Activated T-helper 2 cell treated with anti-CD3 and anti-CD28 coated beads, Interferon-gamma antibody, Interleukin-2, Interleukin-4, amounts not matched to agents 10 μg/mL and 5 μg/mL and 100 μg/mL, durations not matched to agents 14 hours and 24 hours and 36 hours (primary cell): ENCODE measurements at regions of chr6 and their contacts with region 1.

Region 1: DNA sequence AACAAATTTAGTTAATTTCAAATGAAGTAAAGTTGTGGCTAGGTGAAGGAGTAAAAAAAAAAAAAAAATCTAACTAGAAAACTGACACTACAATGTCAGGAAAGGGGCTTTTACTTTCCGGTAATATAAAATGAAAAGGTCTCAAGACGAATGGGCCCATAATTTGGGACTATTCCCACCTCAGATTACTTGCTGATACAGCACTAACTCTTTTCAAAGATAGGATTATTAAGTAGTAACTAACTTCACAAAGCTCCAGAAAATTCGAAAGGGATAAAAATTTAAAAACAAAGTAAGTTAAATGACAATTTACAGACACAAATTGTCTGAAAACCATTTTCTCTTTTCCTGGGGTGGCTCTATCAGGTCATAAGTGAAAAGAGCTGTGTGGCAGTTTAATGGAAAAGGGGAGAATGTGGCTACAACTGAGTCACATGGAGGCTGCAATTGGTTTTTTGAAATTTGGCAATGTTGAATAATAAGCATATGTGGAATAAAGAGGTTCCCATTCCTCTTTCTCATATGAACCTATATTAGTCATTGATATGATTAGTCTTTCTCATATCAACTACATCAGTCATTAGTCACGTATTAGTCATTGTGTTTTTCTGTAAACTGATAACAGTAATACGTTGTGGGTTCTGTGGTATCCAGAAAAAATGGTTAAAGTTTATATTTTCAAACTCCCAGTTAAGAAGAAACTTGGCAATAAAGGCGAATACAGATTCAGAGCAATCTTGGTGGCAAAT is 78.0 kb downstream of the RWDD2A start:
- DNase-seq: no peak
- H3K4me3 Mint-ChIP-seq: no peak overlapping the region
- H3K27ac Mint-ChIP-seq: no peak overlapping the region
- H3K4me1 Mint-ChIP-seq: peaks cover 5% of the 10 kb centered on the region
- H3K27me3 Mint-ChIP-seq: peaks cover 9% of the 10 kb centered on the region

Region 2: GRCh38 chr6:83067448-83068413 is 203.4 kb before region 1 on chr6 and contains the start of gene DOP1A:
- intact Hi-C with region 1: no loop called
- DNase-seq: peak; percentile 92
- H3K4me3 Mint-ChIP-seq: peak within 1 kb of the TSS; percentile 86
- H3K27ac Mint-ChIP-seq: peak within 1 kb of the TSS; percentile 65
- H3K4me1 Mint-ChIP-seq: peaks cover 31% of the 10 kb centered on the region
- H3K27me3 Mint-ChIP-seq: no peaks in the 10 kb centered on the region
- total RNA-seq, gene DOP1A: 6.5 and 7.5 TPM in 2 replicates

Region 3: DNA sequence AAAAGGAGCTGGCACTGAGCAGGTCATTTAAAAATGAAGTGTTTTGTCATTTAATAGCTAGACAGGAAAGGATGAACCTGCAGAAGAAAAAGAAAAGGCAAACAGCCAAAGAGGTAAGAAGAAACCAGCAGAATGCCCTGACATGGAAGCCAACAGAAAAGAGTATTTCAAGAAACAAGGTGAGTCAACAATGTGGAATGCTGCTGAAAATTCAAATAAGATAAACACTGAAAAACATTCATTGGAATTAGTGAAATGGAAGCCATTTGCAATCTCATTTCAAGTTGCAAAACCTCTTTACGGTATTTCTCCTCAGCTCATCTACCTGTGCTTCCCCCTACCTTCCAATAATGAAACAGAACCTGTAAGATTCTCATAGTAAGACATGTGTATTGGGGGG is 18.4 kb before region 1 on chr6:
- intact Hi-C with region 1: no loop called
- DNase-seq: no peak
- H3K4me3 Mint-ChIP-seq: no peak overlapping the region
- H3K27ac Mint-ChIP-seq: no peak overlapping the region
- H3K4me1 Mint-ChIP-seq: no peaks in the 10 kb centered on the region
- H3K27me3 Mint-ChIP-seq: no peaks in the 10 kb centered on the region

Region 4: GRCh38 chr6:83292900-83293843 is 22.0 kb after region 1 on chr6:
- intact Hi-C with region 1: loop called (anchors 1 kb)
- DNase-seq: no peak
- H3K4me3 Mint-ChIP-seq: no peak overlapping the region
- H3K27ac Mint-ChIP-seq: no peak overlapping the region
- H3K4me1 Mint-ChIP-seq: peaks cover 9% of the 10 kb centered on the region
- H3K27me3 Mint-ChIP-seq: peaks cover 34% of the 10 kb centered on the region

Region 5: GRCh38 chr6:83459663-83460062 is 188.5 kb after region 1 on chr6:
- intact Hi-C with region 1: no loop called
- DNase-seq: no peak
- H3K4me3 Mint-ChIP-seq: no peak overlapping the region
- H3K27ac Mint-ChIP-seq: no peak overlapping the region
- H3K4me1 Mint-ChIP-seq: no peaks in the 10 kb centered on the region
- H3K27me3 Mint-ChIP-seq: no peaks in the 10 kb centered on the region